ENCODE measurements at regions of chr18 and their contacts with region 1.

Region 1: DNA sequence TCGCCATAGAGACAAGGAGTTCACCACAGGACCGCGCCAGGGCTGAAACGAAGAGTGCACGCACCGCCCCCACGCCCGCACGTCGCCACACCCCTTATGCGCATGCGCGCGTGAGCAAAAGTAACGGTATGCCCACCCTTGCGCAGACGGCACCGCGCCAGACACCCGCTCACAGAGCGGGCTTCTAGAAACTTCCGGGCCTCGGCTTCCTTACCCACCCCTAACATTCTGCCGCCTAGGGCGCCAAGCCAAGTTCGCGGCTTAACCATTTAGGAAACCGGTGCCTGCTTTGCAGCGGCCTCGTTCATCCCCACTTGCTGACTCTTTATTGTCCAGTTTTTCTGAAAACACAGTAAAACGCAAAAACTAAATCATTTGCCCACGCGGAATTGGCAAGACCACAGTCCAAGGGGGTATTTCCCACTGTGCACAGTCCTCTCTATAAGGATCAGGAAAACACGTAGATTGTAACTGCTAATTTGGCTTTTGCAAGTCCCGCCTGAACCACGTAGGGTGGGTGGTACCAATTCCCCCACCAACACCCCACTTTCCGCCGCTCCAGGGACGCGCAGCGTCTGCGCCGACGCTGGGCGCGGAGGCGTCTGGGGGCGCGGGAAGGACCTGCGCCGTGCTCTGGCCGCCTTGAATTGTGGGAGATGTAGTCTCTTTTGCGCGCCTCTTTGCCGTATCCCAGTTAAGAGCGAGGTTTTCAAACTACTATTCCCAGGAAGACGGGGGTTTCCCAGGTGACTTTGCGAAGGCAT is at the starts of genes FBXO15 and TIMM21:
- DNase-seq: peak; percentile 98
- ATAC-seq: peak; percentile 84
- H3K4me3 ChIP-seq: peak within 1 kb of the TSS; percentile 75 to 99 (median 89)
- H3K4me3 Mint-ChIP-seq: peak within 1 kb of the TSS; percentile 94
- H3K27ac ChIP-seq: peak within 1 kb of the TSS; percentile 95 to 99
- H3K27ac Mint-ChIP-seq: peak within 1 kb of the TSS; percentile 100
- H3K4me1 ChIP-seq: peaks cover 15 to 21% of the 10 kb centered on the region in 2 donors
- H3K4me1 Mint-ChIP-seq: peaks cover 36% of the 10 kb centered on the region
- H3K27me3 ChIP-seq: no peaks in the 10 kb centered on the region
- H3K27me3 Mint-ChIP-seq: peaks cover 7% of the 10 kb centered on the region
- CTCF ChIP-seq: peak; percentile 1
- total RNA-seq, gene FBXO15: 3.7 and 4.1 TPM in 2 replicates
- total RNA-seq, gene TIMM21: 24.3 and 25.0 TPM in 2 replicates

Region 2: GRCh38 chr18:73785271-73785670 is 362.7 kb before region 1 on chr18:
- CTCF ChIA-PET with region 1: no interaction called
- POLR2A ChIA-PET with region 1: no interaction called
- intact Hi-C with region 1: no loop called
- DNase-seq: no peak
- ATAC-seq: no peak
- H3K4me3 ChIP-seq: no peak overlapping the region
- H3K4me3 Mint-ChIP-seq: no peak overlapping the region
- H3K27ac ChIP-seq: no peak overlapping the region
- H3K27ac Mint-ChIP-seq: no peak overlapping the region
- H3K4me1 ChIP-seq: no peaks in the 10 kb centered on the region
- H3K4me1 Mint-ChIP-seq: no peaks in the 10 kb centered on the region
- H3K27me3 ChIP-seq: no peaks in the 10 kb centered on the region
- H3K27me3 Mint-ChIP-seq: no peaks in the 10 kb centered on the region
- CTCF ChIP-seq: no peak

Region 3: GRCh38 chr18:74242438-74243096 is 94.6 kb after region 1 on chr18:
- CTCF ChIA-PET with region 1: no interaction called
- POLR2A ChIA-PET with region 1: no interaction called
- intact Hi-C with region 1: loop called (anchors 5 kb)
- DNase-seq: no peak
- ATAC-seq: no peak
- H3K4me3 ChIP-seq: no peak overlapping the region
- H3K4me3 Mint-ChIP-seq: no peak overlapping the region
- H3K27ac ChIP-seq: no peak overlapping the region
- H3K27ac Mint-ChIP-seq: no peak overlapping the region
- H3K4me1 ChIP-seq: peaks cover 0 to 16% of the 10 kb centered on the region in 2 donors
- H3K4me1 Mint-ChIP-seq: peaks cover 42% of the 10 kb centered on the region
- H3K27me3 ChIP-seq: no peaks in the 10 kb centered on the region
- H3K27me3 Mint-ChIP-seq: peaks cover 8% of the 10 kb centered on the region
- CTCF ChIP-seq: no peak

Region 4: DNA sequence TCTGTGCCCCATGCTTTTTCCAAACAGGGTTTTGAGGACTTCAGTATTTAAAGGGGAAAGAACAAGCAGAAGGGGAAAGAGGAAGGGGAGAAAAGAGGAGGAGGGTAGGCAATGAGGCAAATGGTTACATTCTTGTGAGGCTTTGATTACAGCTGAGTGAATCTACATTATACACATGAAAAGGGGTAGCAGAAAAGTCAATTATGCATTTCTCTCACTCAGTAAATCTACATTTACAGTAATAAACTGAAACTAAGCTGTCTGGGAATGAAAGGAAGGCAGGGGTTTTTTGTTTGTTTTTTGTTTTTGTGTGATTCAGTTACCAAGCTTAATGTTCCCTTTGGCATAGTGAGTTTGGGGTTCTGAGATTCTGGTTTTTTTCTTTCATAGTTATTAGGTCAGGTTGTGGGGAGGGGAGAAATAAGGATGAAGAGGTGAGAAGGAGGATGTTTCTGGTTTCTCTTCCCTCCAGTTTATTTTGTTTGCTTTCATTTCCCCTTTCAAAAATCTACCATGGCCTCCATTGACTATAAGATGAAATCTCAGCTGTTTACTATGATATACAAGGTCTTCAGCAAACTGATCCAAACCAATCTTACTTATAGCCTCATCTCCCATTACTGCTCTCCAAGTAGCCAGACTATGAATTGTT is 186.4 kb after region 1 on chr18:
- CTCF ChIA-PET with region 1: no interaction called
- POLR2A ChIA-PET with region 1: no interaction called
- intact Hi-C with region 1: loop called (anchors 2 kb)
- DNase-seq: peak; percentile 72
- ATAC-seq: peak; percentile 88
- H3K4me3 ChIP-seq: no peak overlapping the region
- H3K4me3 Mint-ChIP-seq: peak overlapping the region; percentile 61
- H3K27ac ChIP-seq: peak overlapping the region; percentile 51 to 78
- H3K27ac Mint-ChIP-seq: peak overlapping the region; percentile 92
- H3K4me1 ChIP-seq: peaks cover 22 to 24% of the 10 kb centered on the region in 2 donors
- H3K4me1 Mint-ChIP-seq: peaks cover 45% of the 10 kb centered on the region
- H3K27me3 ChIP-seq: no peaks in the 10 kb centered on the region
- H3K27me3 Mint-ChIP-seq: no peaks in the 10 kb centered on the region
- CTCF ChIP-seq: no peak

Measured in B cell (primary cell).